Aorta (tissue), 5 donors: ENCODE measurements at regions of chr11 and their contacts with region 1.

Region 1: GRCh38 chr11:111926505-111927391 is 8.0 kb downstream of the C11orf52 start:
- DNase-seq: peak; percentile 97 to 98
- ATAC-seq: peak; percentile 97
- H3K4me3 ChIP-seq: no peak overlapping the region
- H3K27ac ChIP-seq: peak overlapping the region in 1 of 2 donors; percentile 95
- H3K4me1 ChIP-seq: peaks cover 0 to 6% of the 10 kb centered on the region in 2 donors
- H3K27me3 ChIP-seq: no peaks in the 10 kb centered on the region

Region 2: GRCh38 chr11:111911563-111912401 is 15.0 kb before region 1 on chr11 and contains the start of gene CRYAB:
- intact Hi-C with region 1: loop called in 1 of 2 experiments (anchors 1 kb)
- DNase-seq: peak; percentile 92 to 95
- ATAC-seq: peak; percentile 87
- H3K4me3 ChIP-seq: peak within 1 kb of the TSS; percentile 79 to 98
- H3K27ac ChIP-seq: peak within 1 kb of the TSS; percentile 97 to 98
- H3K4me1 ChIP-seq: peaks cover 0 to 6% of the 10 kb centered on the region in 2 donors
- H3K27me3 ChIP-seq: no peaks in the 10 kb centered on the region
- total RNA-seq, gene CRYAB: 323 to 2,347 TPM